Heart right ventricle (tissue), 16 donors: ENCODE measurements at regions of chr3 and their contacts with region 1.

Region 1: GRCh38 chr3:195226900-195227447 is 44.0 kb downstream of the XXYLT1 start:
- DNase-seq: no peak
- ATAC-seq: peak in 4 of 8 donors; percentile 39 to 70 (median 58)
- H3K4me3 ChIP-seq: no peak overlapping the region
- H3K27ac ChIP-seq: no peak overlapping the region
- H3K4me1 ChIP-seq: peaks cover 10 to 22% (median 13%) of the 10 kb centered on the region in 9 donors
- H3K27me3 ChIP-seq: no peaks in the 10 kb centered on the region
- CTCF ChIP-seq: peak in 7 of 9 donors; percentile 1 to 60 (median 33)

Region 2: GRCh38 chr3:195139091-195139839 is 87.7 kb before region 1 on chr3:
- intact Hi-C with region 1: loop called in 1 of 10 experiments (anchors 5 kb)
- DNase-seq: no peak
- ATAC-seq: peak in 7 of 8 donors; percentile 36 to 73 (median 48)
- H3K4me3 ChIP-seq: peak overlapping the region in 1 of 10 donors; percentile 11
- H3K27ac ChIP-seq: peak overlapping the region in 8 of 10 donors; percentile 7 to 62 (median 42)
- H3K4me1 ChIP-seq: peaks cover 0 to 5% (median 0%) of the 10 kb centered on the region in 9 donors
- H3K27me3 ChIP-seq: no peaks in the 10 kb centered on the region
- CTCF ChIP-seq: no peak

Region 3: GRCh38 chr3:195297446-195297845 is 70.5 kb after region 1 on chr3:
- intact Hi-C with region 1: no loop called
- DNase-seq: no peak
- ATAC-seq: no peak
- H3K4me3 ChIP-seq: no peak overlapping the region
- H3K27ac ChIP-seq: no peak overlapping the region
- H3K4me1 ChIP-seq: no peaks in the 10 kb centered on the region
- H3K27me3 ChIP-seq: no peaks in the 10 kb centered on the region
- CTCF ChIP-seq: no peak